MCF 10A (cell line): ENCODE measurements at regions of chr5 and their contacts with region 1.

Region 1: GRCh38 chr5:138641547-138642298 is 66.5 kb upstream of the HSPA9 start:
- DNase-seq: peak; percentile 91
- H3K4me3 Mint-ChIP-seq: no peak overlapping the region
- H3K27ac Mint-ChIP-seq: no peak overlapping the region
- H3K4me1 Mint-ChIP-seq: peaks cover 4% of the 10 kb centered on the region
- H3K27me3 Mint-ChIP-seq: no peaks in the 10 kb centered on the region
- CTCF ChIP-seq: peak; percentile 97

Region 2: DNA sequence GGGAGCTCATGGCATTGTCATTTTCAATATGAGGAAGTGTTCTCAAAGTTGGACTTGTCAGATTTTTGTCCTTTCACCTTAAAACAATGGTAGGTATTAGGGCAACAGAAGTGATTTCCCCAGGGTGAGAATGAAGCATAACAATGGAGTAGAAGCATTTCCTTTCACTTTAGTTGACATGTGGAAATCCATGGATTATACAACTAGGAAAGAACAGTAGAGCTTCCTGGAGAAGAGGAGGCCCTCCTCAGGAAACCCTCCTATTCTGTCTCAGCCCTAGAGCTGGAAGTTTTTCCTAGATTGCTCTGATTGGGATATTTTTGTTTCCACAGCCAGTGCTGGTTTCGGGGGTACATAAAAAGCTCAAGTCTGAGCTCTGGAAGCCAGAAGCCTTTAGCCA is 216.6 kb before region 1 on chr5:
- CTCF ChIA-PET with region 1: no interaction called
- POLR2A ChIA-PET with region 1: no interaction called
- intact Hi-C with region 1: no loop called
- DNase-seq: no peak
- H3K4me3 Mint-ChIP-seq: no peak overlapping the region
- H3K27ac Mint-ChIP-seq: no peak overlapping the region
- H3K4me1 Mint-ChIP-seq: peaks cover 6% of the 10 kb centered on the region
- H3K27me3 Mint-ChIP-seq: no peaks in the 10 kb centered on the region
- CTCF ChIP-seq: no peak

Region 3: DNA sequence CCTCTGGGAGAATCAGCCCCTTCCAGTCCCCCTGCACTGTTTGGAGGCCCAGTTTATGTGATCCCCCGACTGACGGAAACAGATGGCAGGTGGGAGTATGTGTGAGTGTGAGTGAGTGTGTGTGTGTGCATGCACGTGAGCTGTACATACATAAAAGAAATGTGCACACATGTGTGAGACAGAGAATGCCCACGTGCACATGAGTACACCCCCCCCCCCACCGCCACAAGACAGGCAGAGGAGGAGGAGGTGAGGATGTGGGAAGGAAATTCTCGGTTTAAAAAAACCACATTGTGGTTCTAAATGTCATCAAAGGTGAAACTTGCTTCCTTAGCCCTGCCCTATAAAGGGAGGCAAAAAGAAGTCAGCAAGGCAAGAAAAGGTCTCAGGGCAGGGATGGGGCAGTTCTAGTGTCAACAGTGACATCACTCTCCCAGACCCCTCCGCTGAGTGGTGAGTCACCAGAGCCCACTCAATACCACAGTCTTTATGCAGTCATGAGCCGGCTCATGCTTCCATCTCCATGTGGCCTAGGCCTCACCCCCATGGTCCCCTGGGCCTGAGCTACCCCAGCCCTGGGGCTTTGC is 12.7 kb after region 1 on chr5:
- CTCF ChIA-PET with region 1: interaction called, 22 read pairs
- POLR2A ChIA-PET with region 1: no interaction called
- intact Hi-C with region 1: no loop called
- DNase-seq: no peak
- H3K4me3 Mint-ChIP-seq: no peak overlapping the region
- H3K27ac Mint-ChIP-seq: no peak overlapping the region
- H3K4me1 Mint-ChIP-seq: no peaks in the 10 kb centered on the region
- H3K27me3 Mint-ChIP-seq: no peaks in the 10 kb centered on the region
- CTCF ChIP-seq: no peak

Region 4: GRCh38 chr5:138936225-138936967 is 294.7 kb after region 1 on chr5:
- CTCF ChIA-PET with region 1: interaction called, 3 read pairs
- POLR2A ChIA-PET with region 1: no interaction called
- intact Hi-C with region 1: loop called (anchors 5 kb)
- DNase-seq: no peak
- H3K4me3 Mint-ChIP-seq: no peak overlapping the region
- H3K27ac Mint-ChIP-seq: peak overlapping the region; percentile 10
- H3K4me1 Mint-ChIP-seq: no peaks in the 10 kb centered on the region
- H3K27me3 Mint-ChIP-seq: no peaks in the 10 kb centered on the region
- CTCF ChIP-seq: no peak